ENCODE measurements at regions of chr18 and their contacts with region 1.

Region 1: DNA sequence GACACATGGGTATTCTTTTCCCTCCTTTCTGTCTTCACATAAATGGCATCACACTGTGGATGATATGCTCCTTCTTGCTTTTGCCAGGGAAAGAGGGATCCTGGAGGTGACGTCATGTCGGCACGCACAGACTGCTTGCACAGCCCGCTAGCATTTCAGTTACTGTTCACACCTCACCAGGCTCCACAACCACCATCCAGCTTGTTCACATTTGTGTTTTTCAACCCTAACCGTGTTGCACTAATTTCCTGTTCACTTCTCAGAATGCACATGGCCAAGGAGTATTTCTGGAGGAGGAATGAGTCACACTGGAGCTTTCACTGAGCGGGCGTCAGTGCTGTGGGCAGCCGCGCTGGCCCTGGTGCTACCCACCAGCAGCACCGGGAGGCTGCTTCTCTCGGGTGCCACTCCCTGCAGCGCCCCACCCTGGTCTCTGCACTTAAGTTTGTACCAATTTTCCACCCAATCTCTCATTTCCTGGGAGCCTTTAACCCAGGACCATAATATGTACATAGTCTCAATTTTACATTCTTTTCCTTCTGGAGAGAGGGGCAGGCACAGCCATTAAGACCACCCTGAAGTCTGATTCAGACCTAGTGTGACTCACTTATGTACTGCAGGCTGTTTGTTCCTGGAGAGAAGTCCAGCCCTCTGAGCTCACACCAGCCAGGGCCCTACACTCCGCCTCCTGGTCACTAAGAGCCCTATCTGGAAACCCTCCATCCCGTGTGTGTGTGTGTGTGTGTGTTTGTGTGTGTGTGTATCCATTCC is 65.1 kb downstream of the MBP start:
- DNase-seq: peak; percentile 85
- ATAC-seq: peak; percentile 50
- H3K4me3 Mint-ChIP-seq: peak overlapping the region; percentile 48
- H3K27ac Mint-ChIP-seq: peak overlapping the region; percentile 94
- H3K4me1 Mint-ChIP-seq: peaks cover 100% of the 10 kb centered on the region
- H3K27me3 Mint-ChIP-seq: no peaks in the 10 kb centered on the region

Region 2: GRCh38 chr18:76492669-76493212 is 574.7 kb before region 1 on chr18:
- CTCF ChIA-PET with region 1: no interaction called
- POLR2A ChIA-PET with region 1: no interaction called
- intact Hi-C with region 1: loop called in 1 of 2 experiments (anchors 5 kb)
- DNase-seq: peak; percentile 100
- ATAC-seq: peak; percentile 85
- H3K4me3 Mint-ChIP-seq: peak overlapping the region; percentile 87
- H3K27ac Mint-ChIP-seq: peak overlapping the region; percentile 89
- H3K4me1 Mint-ChIP-seq: peaks cover 36% of the 10 kb centered on the region
- H3K27me3 Mint-ChIP-seq: peaks cover 33% of the 10 kb centered on the region

Region 3: DNA sequence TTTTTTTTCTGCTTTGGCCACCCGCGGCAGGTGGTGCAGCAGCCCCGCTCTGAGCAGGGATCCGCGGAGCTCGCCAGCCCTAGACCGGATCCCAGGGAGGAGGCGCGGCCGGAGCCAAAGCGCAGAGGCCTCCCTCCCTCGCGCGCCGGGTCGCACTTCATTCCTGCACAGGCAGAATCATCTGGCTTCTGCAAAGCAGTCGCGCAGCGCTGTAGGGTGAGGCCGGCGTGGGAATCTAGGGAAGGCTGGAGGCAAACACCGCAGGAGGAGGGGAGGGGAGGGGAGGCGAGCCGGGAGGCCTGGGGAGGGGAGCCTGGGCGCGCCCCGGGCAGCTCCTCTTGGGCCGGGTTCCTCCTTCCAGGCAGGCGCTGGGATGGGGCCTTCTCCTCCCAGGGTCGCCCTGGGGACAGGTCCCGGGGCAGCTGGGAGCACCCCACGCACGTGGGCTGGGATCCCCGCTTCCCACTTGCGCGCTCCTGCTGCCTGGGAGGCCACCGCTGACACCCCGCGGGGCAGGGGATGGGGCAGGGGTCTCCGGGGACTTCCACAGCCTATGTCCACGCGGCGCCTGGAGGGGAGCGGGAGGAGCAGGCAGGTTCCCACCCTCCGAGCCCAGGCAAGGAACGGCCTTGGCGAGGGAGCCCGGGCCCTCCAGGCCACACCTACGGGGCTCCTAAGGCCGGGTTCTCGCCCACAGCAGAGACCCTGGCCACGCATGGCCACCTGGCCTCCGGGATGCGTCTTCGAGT is 20.1 kb after region 1 on chr18:
- CTCF ChIA-PET with region 1: no interaction called
- POLR2A ChIA-PET with region 1: no interaction called
- intact Hi-C with region 1: loop called in 1 of 2 experiments (anchors 2 kb)
- DNase-seq: no peak
- ATAC-seq: no peak
- H3K4me3 Mint-ChIP-seq: no peak overlapping the region
- H3K27ac Mint-ChIP-seq: no peak overlapping the region
- H3K4me1 Mint-ChIP-seq: peaks cover 63% of the 10 kb centered on the region
- H3K27me3 Mint-ChIP-seq: no peaks in the 10 kb centered on the region

Region 4: GRCh38 chr18:77132371-77133050 is 65.0 kb after region 1 on chr18 and contains the start of gene MBP:
- CTCF ChIA-PET with region 1: interaction called, 4 read pairs
- POLR2A ChIA-PET with region 1: interaction called, 13 read pairs
- intact Hi-C with region 1: loop called (anchors 1 to 2 kb)
- DNase-seq: peak; percentile 83
- ATAC-seq: peak; percentile 59
- H3K4me3 Mint-ChIP-seq: peak within 1 kb of the TSS; percentile 99
- H3K27ac Mint-ChIP-seq: peak within 1 kb of the TSS; percentile 98
- H3K4me1 Mint-ChIP-seq: peaks cover 52% of the 10 kb centered on the region
- H3K27me3 Mint-ChIP-seq: no peaks in the 10 kb centered on the region
- total RNA-seq, gene MBP: 47.0 to 65.7 TPM